ENCODE measurements at regions of chr1 and their contacts with region 1.

Region 1: GRCh38 chr1:163071405-163072255 is 2.5 kb downstream of the RGS4 start:
- DNase-seq: peak; percentile 43
- CTCF ChIP-seq: peak; percentile 77

Region 2: GRCh38 chr1:163060343-163061007 is 11.2 kb before region 1 on chr1:
- CTCF ChIA-PET with region 1: interaction called, 21 read pairs
- POLR2A ChIA-PET with region 1: no interaction called
- DNase-seq: no peak
- CTCF ChIP-seq: no peak

Region 3: GRCh38 chr1:163085041-163085903 is 13.6 kb after region 1 on chr1:
- CTCF ChIA-PET with region 1: interaction called, 14 read pairs
- POLR2A ChIA-PET with region 1: no interaction called
- DNase-seq: no peak
- CTCF ChIP-seq: no peak

Region 4: DNA sequence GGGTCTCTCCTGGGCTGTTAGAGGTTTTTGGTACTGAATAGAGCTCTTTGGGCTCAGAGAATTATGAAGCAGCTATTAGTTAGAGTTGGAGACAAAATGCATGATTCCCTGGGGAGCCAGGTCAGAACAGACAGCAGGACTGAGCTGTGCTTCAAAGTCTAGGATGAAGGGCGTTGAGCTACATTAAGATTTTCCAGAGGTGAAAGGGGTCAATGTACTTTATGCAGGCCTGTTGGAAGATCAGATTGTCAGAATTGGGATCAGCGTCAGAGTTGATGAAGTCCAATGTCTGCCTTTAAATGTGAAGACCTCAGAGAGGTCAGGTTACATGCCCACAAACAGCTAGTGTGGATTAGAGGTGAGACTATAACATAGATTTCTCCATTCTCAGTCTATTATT is 77.3 kb after region 1 on chr1:
- CTCF ChIA-PET with region 1: no interaction called
- POLR2A ChIA-PET with region 1: no interaction called
- DNase-seq: no peak
- CTCF ChIP-seq: no peak